Endothelial cell of umbilical vein (primary cell): ENCODE measurements at regions of chr1 and their contacts with region 1.

Region 1: GRCh38 chr1:25253911-25254310 is 6.7 kb upstream of the RSRP1 start:
- DNase-seq: no peak
- H3K4me3 ChIP-seq: no peak overlapping the region
- H3K27ac ChIP-seq: no peak overlapping the region
- H3K4me1 ChIP-seq: peaks cover 3% of the 10 kb centered on the region
- H3K27me3 ChIP-seq: no peaks in the 10 kb centered on the region
- CTCF ChIP-seq: no peak
- POLR2A ChIP-seq: no peak

Region 2: GRCh38 chr1:25204797-25205480 is 49.0 kb before region 1 on chr1:
- CTCF ChIA-PET with region 1: no interaction called
- POLR2A ChIA-PET with region 1: no interaction called
- dilution Hi-C with region 1: no loop called
- intact Hi-C with region 1: no loop called
- DNase-seq: peak; percentile 21
- H3K4me3 ChIP-seq: no peak overlapping the region
- H3K27ac ChIP-seq: no peak overlapping the region
- H3K4me1 ChIP-seq: no peaks in the 10 kb centered on the region
- H3K27me3 ChIP-seq: peaks cover 0 to 6% of the 10 kb centered on the region in 2 experiments
- CTCF ChIP-seq: peak; percentile 57 to 61
- POLR2A ChIP-seq: no peak

Region 3: GRCh38 chr1:25239681-25240541 is 14.0 kb before region 1 on chr1:
- CTCF ChIA-PET with region 1: interaction called, 12 read pairs
- POLR2A ChIA-PET with region 1: no interaction called
- dilution Hi-C with region 1: no loop called
- intact Hi-C with region 1: no loop called
- DNase-seq: peak; percentile 91
- H3K4me3 ChIP-seq: peak overlapping the region; percentile 5 to 43 (median 29)
- H3K27ac ChIP-seq: peak overlapping the region; percentile 36
- H3K4me1 ChIP-seq: peaks cover 19% of the 10 kb centered on the region
- H3K27me3 ChIP-seq: no peaks in the 10 kb centered on the region
- CTCF ChIP-seq: peak; percentile 62 to 76
- POLR2A ChIP-seq: peak; percentile 89

Region 4: DNA sequence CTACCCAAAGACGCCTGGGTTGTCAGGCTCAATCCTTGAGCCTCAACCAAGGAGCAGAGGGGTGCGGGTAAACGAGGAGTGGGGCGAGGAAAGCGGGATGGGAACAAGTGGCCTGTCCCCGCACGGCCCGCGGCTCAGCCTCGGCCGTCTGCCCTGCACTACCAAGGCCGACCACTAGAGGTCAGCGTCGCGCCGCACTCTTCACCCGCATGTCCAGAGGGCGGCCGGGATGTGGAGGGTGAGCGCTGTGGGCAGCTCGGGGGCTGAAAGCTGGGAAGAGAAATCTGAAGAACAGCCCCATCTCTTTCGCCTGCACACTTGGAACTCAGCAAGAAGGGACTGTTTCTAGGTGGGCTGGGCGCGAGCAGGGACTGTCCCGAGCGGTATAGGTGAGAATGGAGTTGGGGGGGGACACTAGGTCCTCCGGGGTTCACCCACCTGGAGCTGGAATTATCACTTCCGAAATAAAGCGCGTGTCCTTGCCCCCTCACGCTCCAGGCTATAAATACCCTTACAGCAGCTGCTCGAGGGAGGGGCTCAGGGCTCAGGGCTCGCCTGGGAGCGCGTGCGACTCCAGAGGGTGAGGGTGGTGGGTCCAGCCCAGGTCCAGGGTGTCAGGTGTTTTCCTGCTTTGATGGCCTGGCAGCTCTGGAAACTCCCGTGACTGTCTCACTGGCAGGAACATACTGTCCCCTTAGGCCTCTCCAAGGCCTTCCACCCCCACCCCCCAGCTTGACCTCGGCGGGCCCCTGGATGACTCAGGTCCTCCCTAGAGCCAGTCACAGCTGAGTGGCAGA is 782.2 kb after region 1 on chr1:
- CTCF ChIA-PET with region 1: no interaction called
- POLR2A ChIA-PET with region 1: no interaction called
- dilution Hi-C with region 1: no loop called
- intact Hi-C with region 1: no loop called
- DNase-seq: peak; percentile 74
- H3K4me3 ChIP-seq: peak overlapping the region; percentile 65 to 85 (median 81)
- H3K27ac ChIP-seq: no peak overlapping the region
- H3K4me1 ChIP-seq: peaks cover 15% of the 10 kb centered on the region
- H3K27me3 ChIP-seq: peaks cover 0 to 3% of the 10 kb centered on the region in 2 experiments
- CTCF ChIP-seq: peak; percentile 98 to 99
- POLR2A ChIP-seq: no peak